Naive thymus-derived CD8-positive, alpha-beta T cell (primary cell): ENCODE measurements at regions of chr16 and their contacts with region 1.

Region 1: GRCh38 chr16:11586856-11587642 is at the start of gene LITAF:
- DNase-seq: peak; percentile 38 to 78 (median 62)
- ATAC-seq: peak; percentile 64 to 66
- H3K4me3 Mint-ChIP-seq: peak within 1 kb of the TSS; percentile 90 to 100 (median 93)
- H3K27ac Mint-ChIP-seq: peak within 1 kb of the TSS; percentile 92 to 98 (median 96)
- H3K4me1 Mint-ChIP-seq: peaks cover 22 to 54% (median 41%) of the 10 kb centered on the region in 4 donors
- H3K27me3 Mint-ChIP-seq: no peaks in the 10 kb centered on the region
- polyA plus RNA-seq, gene LITAF: 553 to 770 (median 597) TPM

Region 2: GRCh38 chr16:11535471-11535870 is 51.6 kb before region 1 on chr16:
- POLR2A ChIA-PET with region 1: interaction called, 10 read pairs
- DNase-seq: no peak
- ATAC-seq: no peak
- H3K4me3 Mint-ChIP-seq: peak overlapping the region in 1 of 10 donors; percentile 63
- H3K27ac Mint-ChIP-seq: peak overlapping the region in 3 of 10 donors; percentile 50 to 52 (median 51)
- H3K4me1 Mint-ChIP-seq: peaks cover 9 to 33% (median 28%) of the 10 kb centered on the region in 4 donors
- H3K27me3 Mint-ChIP-seq: no peaks in the 10 kb centered on the region

Region 3: GRCh38 chr16:11576427-11577289 is 10.4 kb before region 1 on chr16:
- POLR2A ChIA-PET with region 1: interaction called, 17 read pairs
- DNase-seq: no peak
- ATAC-seq: no peak
- H3K4me3 Mint-ChIP-seq: peak overlapping the region in 9 of 10 donors; percentile 62 to 85 (median 70)
- H3K27ac Mint-ChIP-seq: peak overlapping the region in 9 of 10 donors; percentile 54 to 95 (median 90)
- H3K4me1 Mint-ChIP-seq: peaks cover 32 to 91% (median 87%) of the 10 kb centered on the region in 4 donors
- H3K27me3 Mint-ChIP-seq: no peaks in the 10 kb centered on the region

Region 4: DNA sequence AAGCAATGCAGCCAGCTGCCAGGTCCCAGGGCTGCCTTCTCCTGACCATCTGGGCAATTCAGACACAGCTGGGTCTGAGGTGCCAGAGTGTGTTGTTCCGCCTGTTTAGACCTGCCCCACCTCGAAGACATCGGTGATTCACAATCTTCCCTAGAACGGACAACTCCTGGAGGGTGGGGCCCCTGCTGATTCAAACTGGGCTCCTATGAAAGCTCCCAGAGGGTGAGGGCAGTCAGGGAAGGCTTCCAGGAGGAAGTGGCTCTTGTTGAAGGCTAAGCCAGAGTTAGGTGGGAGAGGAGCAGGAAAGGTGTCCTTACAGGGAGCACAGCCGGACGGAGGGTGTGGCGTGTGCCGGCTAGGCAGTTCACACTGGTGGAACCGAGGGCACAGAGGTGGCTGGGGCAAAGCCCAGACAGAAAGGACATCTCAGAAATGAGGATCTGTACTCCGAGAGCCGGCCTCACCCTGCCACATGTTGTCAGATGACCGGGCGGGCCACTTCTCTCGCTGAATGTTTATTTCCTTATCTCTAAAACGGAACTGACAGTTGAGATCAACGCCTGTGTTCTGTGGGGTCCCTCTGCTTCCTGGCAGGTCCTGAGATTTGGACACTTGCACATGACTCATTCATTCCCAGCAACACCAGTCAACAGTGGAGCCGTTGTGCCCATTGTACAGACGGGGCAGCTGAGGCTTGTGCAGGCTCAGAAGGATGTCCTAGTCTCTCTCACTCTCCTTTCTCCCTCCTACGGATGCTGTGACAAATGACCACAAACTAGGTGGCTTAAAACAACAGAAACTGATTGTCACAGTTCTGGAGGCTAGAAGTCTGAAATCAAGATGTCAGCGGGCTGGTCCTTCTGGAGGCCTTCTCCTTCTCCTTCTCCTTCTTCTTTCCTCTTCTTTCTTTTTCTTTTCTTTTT is 26.6 kb after region 1 on chr16:
- POLR2A ChIA-PET with region 1: interaction called, 151 read pairs
- DNase-seq: no peak
- ATAC-seq: no peak
- H3K4me3 Mint-ChIP-seq: peak overlapping the region in 3 of 10 donors; percentile 14 to 62 (median 18)
- H3K27ac Mint-ChIP-seq: peak overlapping the region in 9 of 10 donors; percentile 36 to 89 (median 68)
- H3K4me1 Mint-ChIP-seq: peaks cover 18 to 79% (median 72%) of the 10 kb centered on the region in 4 donors
- H3K27me3 Mint-ChIP-seq: no peaks in the 10 kb centered on the region

Region 5: DNA sequence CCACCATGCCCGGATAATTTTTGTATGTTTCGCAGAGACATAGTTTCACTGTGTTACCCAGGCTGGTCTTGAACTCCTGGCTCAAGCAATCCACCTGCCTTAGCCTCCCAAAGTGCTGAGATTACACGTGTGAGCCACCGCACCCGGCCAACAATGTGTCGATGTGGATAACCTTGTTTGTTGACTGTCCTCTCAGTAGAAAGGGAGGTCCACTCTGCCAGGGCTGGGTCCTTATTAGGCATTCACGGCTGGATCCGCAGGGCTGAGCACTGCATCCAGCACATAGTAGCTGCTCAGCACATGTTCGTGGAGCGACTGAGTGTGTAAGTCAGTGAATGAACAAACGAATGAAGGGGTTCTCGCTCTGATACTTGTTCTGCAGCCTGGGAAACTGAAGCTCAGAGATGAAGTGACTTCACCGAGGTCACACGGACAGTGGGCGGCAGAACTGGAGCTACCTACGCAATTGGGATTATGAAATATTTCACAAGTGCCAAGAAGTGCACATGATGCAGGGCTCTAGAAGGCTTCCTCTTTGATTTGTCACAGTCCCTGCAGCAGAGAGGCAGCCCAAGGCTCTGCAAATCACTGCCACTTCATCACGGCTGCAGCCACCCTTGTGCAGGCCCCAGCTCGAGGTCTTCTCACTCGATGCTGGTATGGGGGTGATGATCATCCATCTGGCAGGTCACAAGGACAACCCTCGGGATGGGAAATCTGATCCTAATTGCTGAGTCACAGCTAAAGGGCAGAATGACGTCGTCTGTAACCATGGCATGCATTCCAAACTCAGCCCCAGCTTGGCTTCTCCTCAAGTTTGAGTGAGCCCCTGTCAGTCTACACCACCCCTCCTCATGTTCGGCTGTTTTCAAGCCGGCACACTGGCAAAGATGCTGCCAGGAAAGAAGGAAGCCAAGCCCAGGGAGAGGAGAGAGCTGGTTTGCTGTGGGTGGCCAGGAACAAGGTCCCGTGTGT is 53.2 kb after region 1 on chr16:
- POLR2A ChIA-PET with region 1: interaction called, 10 read pairs
- DNase-seq: peak in 1 of 10 donors; percentile 16
- ATAC-seq: no peak
- H3K4me3 Mint-ChIP-seq: peak overlapping the region in 1 of 10 donors; percentile 3
- H3K27ac Mint-ChIP-seq: peak overlapping the region in 8 of 10 donors; percentile 11 to 91 (median 50)
- H3K4me1 Mint-ChIP-seq: peaks cover 18 to 30% (median 25%) of the 10 kb centered on the region in 4 donors
- H3K27me3 Mint-ChIP-seq: peaks cover 0 to 1% (median 0%) of the 10 kb centered on the region in 5 donors